ENCODE measurements at regions of chrX and their contacts with region 1.

Region 1: GRCh38 chrX:81377329-81377728 is 175.4 kb downstream of the SH3BGRL start:
- DNase-seq: no peak
- H3K4me3 ChIP-seq: no peak overlapping the region
- H3K27ac ChIP-seq: no peak overlapping the region
- H3K4me1 ChIP-seq: no peaks in the 10 kb centered on the region
- H3K27me3 ChIP-seq: no peaks in the 10 kb centered on the region
- CTCF ChIP-seq: peak; percentile 49 to 56 (median 54)
- EP300 ChIP-seq: no peak
- POLR2A ChIP-seq: no peak

Region 2: DNA sequence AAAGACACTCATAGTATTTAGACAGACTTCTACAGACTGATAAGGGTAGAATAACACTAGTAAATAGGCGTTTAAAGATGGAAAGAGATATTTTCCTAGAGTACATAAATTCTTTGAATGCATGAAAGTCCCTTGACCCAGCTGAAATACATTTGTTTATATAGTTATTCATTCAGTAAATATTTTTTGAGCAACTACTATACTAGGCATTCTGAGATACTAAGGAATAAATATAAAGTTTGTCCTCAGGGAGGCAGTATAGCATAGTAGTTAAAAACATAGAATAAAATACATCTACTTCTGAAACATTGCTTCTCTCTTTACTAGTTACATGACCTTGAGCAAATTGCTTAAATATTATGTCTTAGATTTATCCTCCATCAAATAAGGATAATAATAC is 203.0 kb before region 1 on chrX:
- intact Hi-C with region 1: loop called (anchors 2 kb)
- DNase-seq: no peak
- H3K4me3 ChIP-seq: no peak overlapping the region
- H3K27ac ChIP-seq: no peak overlapping the region
- H3K4me1 ChIP-seq: no peaks in the 10 kb centered on the region
- H3K27me3 ChIP-seq: no peaks in the 10 kb centered on the region
- CTCF ChIP-seq: peak in 2 of 3 experiments; percentile 23 to 31
- EP300 ChIP-seq: no peak
- POLR2A ChIP-seq: no peak